ENCODE measurements at regions of chr22 and their contacts with region 1.

Region 1: DNA sequence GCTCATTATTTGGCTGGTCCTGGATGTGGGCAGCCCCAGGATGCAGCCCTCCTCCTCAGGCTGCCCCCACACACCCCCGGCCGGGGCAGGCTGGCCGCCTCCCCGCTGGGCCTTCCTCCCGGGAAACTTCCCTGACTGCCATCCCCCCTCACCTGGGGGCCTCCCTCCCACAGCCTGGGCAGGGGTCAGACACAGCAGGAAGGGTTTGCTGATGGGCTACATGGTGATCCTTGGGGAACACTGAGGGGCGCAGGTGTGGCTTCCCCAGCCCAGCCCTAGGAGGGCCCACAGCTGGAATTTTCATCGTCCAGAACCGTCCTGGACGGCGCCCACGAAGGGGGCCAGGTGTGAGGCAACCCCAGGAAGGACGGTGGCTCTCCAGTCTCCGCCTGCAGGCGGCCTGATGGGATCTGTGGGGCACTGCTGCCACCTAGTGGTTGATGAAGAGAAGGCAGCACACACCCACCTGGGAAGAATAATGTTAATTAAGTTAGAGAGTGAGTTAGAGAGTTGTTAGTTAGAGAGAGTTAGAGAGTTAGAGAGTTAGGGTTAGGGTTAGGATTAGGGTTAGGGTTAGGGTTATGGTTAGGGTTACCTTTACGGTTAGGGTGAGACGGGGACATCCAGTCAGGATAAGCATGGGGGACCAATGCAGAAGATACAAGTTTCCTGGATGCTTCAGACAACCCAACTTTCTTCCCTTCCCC is 75.9 kb upstream of the PRR5 start:
- DNase-seq: peak; percentile 68 to 90 (median 78)
- ATAC-seq: peak; percentile 91
- H3K4me3 ChIP-seq: no peak overlapping the region
- H3K4me3 Mint-ChIP-seq: no peak overlapping the region
- H3K27ac ChIP-seq: no peak overlapping the region
- H3K27ac Mint-ChIP-seq: no peak overlapping the region
- H3K4me1 ChIP-seq: peaks cover 18% of the 10 kb centered on the region
- H3K4me1 Mint-ChIP-seq: no peaks in the 10 kb centered on the region
- H3K27me3 ChIP-seq: no peaks in the 10 kb centered on the region
- H3K27me3 Mint-ChIP-seq: no peaks in the 10 kb centered on the region
- CTCF ChIP-seq: peak; percentile 96

Region 2: DNA sequence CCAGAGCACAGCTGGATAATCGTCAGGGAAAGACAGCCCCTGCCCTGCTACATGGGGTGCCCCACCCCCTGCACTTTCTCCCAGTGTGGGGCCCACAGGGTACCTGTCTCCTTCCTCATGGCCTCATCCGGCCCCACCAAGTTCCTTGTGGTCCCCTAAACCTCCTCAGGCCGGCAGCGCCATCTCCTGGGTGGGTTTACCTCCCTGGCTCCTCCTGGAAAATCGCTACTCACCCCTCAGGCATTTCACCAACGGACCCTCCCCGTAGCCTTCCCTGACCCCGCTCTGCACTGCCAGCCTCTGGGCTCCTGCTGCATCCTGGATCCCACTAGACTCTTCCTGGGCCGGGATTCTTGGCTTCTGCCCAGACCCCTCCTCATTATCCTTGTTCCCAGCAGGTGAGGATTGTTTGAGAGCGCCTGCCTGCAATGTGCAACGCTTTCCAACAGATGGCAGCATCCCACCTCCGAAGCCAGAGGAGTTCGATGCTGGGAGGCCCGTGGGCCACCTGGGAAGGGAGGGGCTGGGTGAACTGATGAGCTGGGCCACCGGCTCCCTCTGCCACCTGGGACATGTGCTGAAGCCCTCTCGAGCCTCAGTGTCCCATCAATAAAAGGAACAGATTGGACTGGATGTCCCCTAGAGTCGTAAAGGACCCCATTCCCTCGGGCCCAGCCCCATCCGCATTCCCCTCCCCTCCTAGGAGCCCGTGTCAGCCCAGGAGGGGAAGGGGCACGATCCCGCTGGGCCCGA is 1395.0 kb before region 1 on chr22:
- CTCF ChIA-PET with region 1: no interaction called
- POLR2A ChIA-PET with region 1: no interaction called
- intact Hi-C with region 1: loop called in 1 of 2 experiments (anchors 5 kb)
- DNase-seq: peak; percentile 55 to 82 (median 58)
- ATAC-seq: peak; percentile 88
- H3K4me3 ChIP-seq: no peak overlapping the region
- H3K4me3 Mint-ChIP-seq: no peak overlapping the region
- H3K27ac ChIP-seq: no peak overlapping the region
- H3K27ac Mint-ChIP-seq: no peak overlapping the region
- H3K4me1 ChIP-seq: peaks cover 6% of the 10 kb centered on the region
- H3K4me1 Mint-ChIP-seq: peaks cover 5% of the 10 kb centered on the region
- H3K27me3 ChIP-seq: no peaks in the 10 kb centered on the region
- H3K27me3 Mint-ChIP-seq: peaks cover 6% of the 10 kb centered on the region
- CTCF ChIP-seq: peak; percentile 97

Region 3: GRCh38 chr22:43385770-43386641 is 1240.1 kb before region 1 on chr22:
- CTCF ChIA-PET with region 1: no interaction called
- POLR2A ChIA-PET with region 1: no interaction called
- intact Hi-C with region 1: loop called (anchors 2 to 5 kb)
- DNase-seq: peak; percentile 50 to 85 (median 63)
- ATAC-seq: peak; percentile 92
- H3K4me3 ChIP-seq: no peak overlapping the region
- H3K4me3 Mint-ChIP-seq: no peak overlapping the region
- H3K27ac ChIP-seq: no peak overlapping the region
- H3K27ac Mint-ChIP-seq: no peak overlapping the region
- H3K4me1 ChIP-seq: peaks cover 26% of the 10 kb centered on the region
- H3K4me1 Mint-ChIP-seq: peaks cover 4% of the 10 kb centered on the region
- H3K27me3 ChIP-seq: peaks cover 13 to 14% of the 10 kb centered on the region in 2 experiments
- H3K27me3 Mint-ChIP-seq: peaks cover 30% of the 10 kb centered on the region
- CTCF ChIP-seq: peak; percentile 85

Region 4: GRCh38 chr22:43884600-43885325 is 741.4 kb before region 1 on chr22:
- CTCF ChIA-PET with region 1: no interaction called
- POLR2A ChIA-PET with region 1: no interaction called
- intact Hi-C with region 1: loop called in 1 of 2 experiments (anchors 10 kb)
- DNase-seq: peak in 12 of 14 experiments; percentile 10 to 54 (median 28)
- ATAC-seq: no peak
- H3K4me3 ChIP-seq: no peak overlapping the region
- H3K4me3 Mint-ChIP-seq: no peak overlapping the region
- H3K27ac ChIP-seq: no peak overlapping the region
- H3K27ac Mint-ChIP-seq: no peak overlapping the region
- H3K4me1 ChIP-seq: peaks cover 3% of the 10 kb centered on the region
- H3K4me1 Mint-ChIP-seq: no peaks in the 10 kb centered on the region
- H3K27me3 ChIP-seq: peaks cover 14 to 21% of the 10 kb centered on the region in 2 experiments
- H3K27me3 Mint-ChIP-seq: peaks cover 32% of the 10 kb centered on the region
- CTCF ChIP-seq: peak; percentile 62

Region 5: DNA sequence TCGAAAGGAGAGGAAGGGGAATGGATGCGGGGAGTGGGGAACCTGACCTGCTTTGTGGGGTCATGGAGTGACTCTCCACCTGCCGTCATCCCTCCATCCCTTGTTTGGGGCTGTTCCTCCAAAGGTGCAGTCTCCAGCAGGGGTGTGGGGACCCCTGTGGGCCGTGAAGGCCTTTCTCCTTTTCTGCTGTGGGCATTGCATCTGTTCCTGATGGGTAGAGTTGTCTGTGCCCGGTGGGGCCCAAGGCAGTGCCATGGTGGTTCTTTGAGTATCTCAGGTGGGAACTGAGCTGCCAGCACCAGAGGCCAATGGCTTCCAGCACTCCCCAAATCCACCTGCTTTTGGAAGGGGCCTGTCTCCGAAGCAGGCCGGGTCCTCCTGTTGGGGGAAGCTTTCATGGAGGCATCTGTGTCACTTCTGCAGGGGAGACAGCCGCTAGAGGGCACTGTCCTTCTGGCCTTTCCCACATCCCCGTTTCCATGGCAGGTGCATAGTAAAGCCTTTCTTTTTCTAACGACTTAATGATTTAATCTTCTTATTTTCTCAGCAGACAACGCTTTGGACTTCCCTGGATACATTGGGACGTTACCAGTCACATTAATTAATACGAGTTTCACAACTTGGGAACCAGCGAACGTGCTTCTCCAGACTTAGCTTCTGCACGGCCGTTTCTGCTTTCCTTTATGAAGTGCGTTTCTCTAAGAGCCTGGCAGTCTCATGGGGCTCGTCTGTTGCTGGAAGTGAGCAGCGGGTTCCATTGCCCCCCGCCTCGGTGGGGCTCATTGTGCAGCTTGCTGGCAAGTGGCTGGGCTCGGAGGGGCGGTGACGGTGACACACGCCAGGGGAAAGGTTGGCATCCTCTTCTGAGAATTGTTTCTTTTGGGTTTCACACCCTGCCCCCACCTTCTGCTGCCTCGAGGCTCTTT is 544.9 kb before region 1 on chr22:
- CTCF ChIA-PET with region 1: interaction called, 7 read pairs
- POLR2A ChIA-PET with region 1: no interaction called
- intact Hi-C with region 1: loop called (anchors 1 kb)
- DNase-seq: peak; percentile 52 to 82 (median 64)
- ATAC-seq: peak; percentile 55
- H3K4me3 ChIP-seq: no peak overlapping the region
- H3K4me3 Mint-ChIP-seq: no peak overlapping the region
- H3K27ac ChIP-seq: no peak overlapping the region
- H3K27ac Mint-ChIP-seq: no peak overlapping the region
- H3K4me1 ChIP-seq: peaks cover 5% of the 10 kb centered on the region
- H3K4me1 Mint-ChIP-seq: no peaks in the 10 kb centered on the region
- H3K27me3 ChIP-seq: no peaks in the 10 kb centered on the region
- H3K27me3 Mint-ChIP-seq: no peaks in the 10 kb centered on the region
- CTCF ChIP-seq: peak; percentile 88

Region 6: DNA sequence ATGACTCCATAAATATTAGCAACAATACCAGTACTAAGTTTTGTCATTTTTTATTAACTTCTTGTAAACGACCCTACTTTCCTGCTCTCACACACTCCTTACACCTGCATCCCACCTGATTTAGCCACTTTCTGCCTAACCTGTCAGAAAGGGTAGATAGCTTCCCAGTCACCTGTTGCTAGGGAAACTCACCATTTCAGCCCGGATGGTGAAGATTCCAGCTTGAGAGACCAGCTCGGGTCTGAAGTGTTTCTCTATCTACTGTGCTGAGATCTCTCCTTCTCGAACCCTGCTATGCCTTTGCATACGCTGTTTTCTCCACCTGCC is 445.5 kb before region 1 on chr22 and contains the start of gene PARVG:
- CTCF ChIA-PET with region 1: no interaction called
- POLR2A ChIA-PET with region 1: no interaction called
- intact Hi-C with region 1: loop called (anchors 2 to 10 kb)
- DNase-seq: peak in 12 of 14 experiments; percentile 19 to 84 (median 39)
- ATAC-seq: peak; percentile 58
- H3K4me3 ChIP-seq: peak within 1 kb of the TSS; percentile 88
- H3K4me3 Mint-ChIP-seq: peak within 1 kb of the TSS; percentile 85
- H3K27ac ChIP-seq: peak within 1 kb of the TSS; percentile 75 to 77
- H3K27ac Mint-ChIP-seq: peak within 1 kb of the TSS; percentile 88
- H3K4me1 ChIP-seq: peaks cover 31% of the 10 kb centered on the region
- H3K4me1 Mint-ChIP-seq: peaks cover 40% of the 10 kb centered on the region
- H3K27me3 ChIP-seq: no peaks in the 10 kb centered on the region
- H3K27me3 Mint-ChIP-seq: no peaks in the 10 kb centered on the region
- CTCF ChIP-seq: no peak
- total RNA-seq, gene PARVG: 142 to 146 TPM

Region 7: DNA sequence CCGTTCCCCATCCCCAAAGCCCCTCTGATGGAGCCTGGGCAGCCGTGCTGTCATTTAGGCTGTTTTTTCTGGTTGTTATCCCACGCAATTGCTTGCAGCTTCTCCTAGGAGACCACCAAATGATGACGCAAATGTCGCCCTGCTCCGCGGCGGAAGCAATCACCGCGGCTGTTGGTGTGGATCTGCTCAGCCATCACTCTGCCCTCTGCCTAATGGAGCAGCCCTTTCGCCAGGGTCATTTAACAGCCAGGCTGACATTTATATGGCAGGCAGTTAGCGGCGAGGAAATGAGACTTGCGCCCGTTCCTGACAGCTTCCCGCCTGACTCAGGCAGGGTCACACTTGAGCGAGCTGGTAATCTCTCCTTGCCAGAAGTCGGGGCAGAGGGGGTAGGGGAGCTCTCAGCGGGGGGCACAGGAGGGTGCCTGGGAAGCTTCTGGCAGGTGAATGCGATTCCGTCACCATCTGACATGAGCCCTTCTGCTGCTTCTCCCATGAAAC is 30.2 kb before region 1 on chr22:
- CTCF ChIA-PET with region 1: no interaction called
- POLR2A ChIA-PET with region 1: no interaction called
- intact Hi-C with region 1: no loop called
- DNase-seq: no peak
- ATAC-seq: no peak
- H3K4me3 ChIP-seq: no peak overlapping the region
- H3K4me3 Mint-ChIP-seq: no peak overlapping the region
- H3K27ac ChIP-seq: no peak overlapping the region
- H3K27ac Mint-ChIP-seq: no peak overlapping the region
- H3K4me1 ChIP-seq: peaks cover 2% of the 10 kb centered on the region
- H3K4me1 Mint-ChIP-seq: no peaks in the 10 kb centered on the region
- H3K27me3 ChIP-seq: peaks cover 9 to 12% of the 10 kb centered on the region in 2 experiments
- H3K27me3 Mint-ChIP-seq: peaks cover 36% of the 10 kb centered on the region
- CTCF ChIP-seq: no peak

Region 8: GRCh38 chr22:44684506-44685383 is 58.6 kb after region 1 on chr22:
- CTCF ChIA-PET with region 1: no interaction called
- POLR2A ChIA-PET with region 1: no interaction called
- intact Hi-C with region 1: loop called in 1 of 2 experiments (anchors 5 kb)
- DNase-seq: peak; percentile 69 to 93 (median 78)
- ATAC-seq: peak; percentile 85
- H3K4me3 ChIP-seq: peak overlapping the region; percentile 13
- H3K4me3 Mint-ChIP-seq: peak overlapping the region; percentile 50
- H3K27ac ChIP-seq: no peak overlapping the region
- H3K27ac Mint-ChIP-seq: peak overlapping the region; percentile 24
- H3K4me1 ChIP-seq: peaks cover 57% of the 10 kb centered on the region
- H3K4me1 Mint-ChIP-seq: peaks cover 32% of the 10 kb centered on the region
- H3K27me3 ChIP-seq: no peaks in the 10 kb centered on the region
- H3K27me3 Mint-ChIP-seq: no peaks in the 10 kb centered on the region
- CTCF ChIP-seq: peak; percentile 98

Measured in CD4-positive, alpha-beta T cell (primary cell).